CD4-positive, alpha-beta memory T cell (primary cell): ENCODE measurements at regions of chr4 and their contacts with region 1.

Region 1: DNA sequence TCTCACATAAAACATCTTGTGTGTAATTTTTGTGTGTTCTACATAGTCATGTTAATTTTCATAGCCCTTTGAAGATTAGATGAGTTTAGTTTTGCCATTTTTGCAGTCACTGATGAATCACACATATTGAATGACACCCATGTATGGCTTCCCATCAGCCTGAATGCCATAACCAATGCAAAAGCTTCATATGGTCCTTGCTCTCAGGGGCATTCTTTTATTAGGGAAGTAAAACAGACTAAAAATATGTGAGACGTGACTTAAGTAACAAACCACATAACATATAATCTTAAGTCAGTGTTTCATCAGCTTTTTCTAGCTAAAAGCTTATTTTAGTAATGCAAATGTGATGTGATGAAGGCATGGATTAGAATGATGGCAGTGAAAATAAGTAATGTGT is 8.2 kb downstream of the SLC25A4 start:
- DNase-seq: no peak
- H3K4me3 ChIP-seq: no peak overlapping the region
- H3K4me3 Mint-ChIP-seq: no peak overlapping the region
- H3K27ac ChIP-seq: no peak overlapping the region
- H3K27ac Mint-ChIP-seq: no peak overlapping the region
- H3K4me1 ChIP-seq: no peaks in the 10 kb centered on the region
- H3K4me1 Mint-ChIP-seq: peaks cover 0 to 2% (median 0%) of the 10 kb centered on the region in 4 donors
- H3K27me3 ChIP-seq: no peaks in the 10 kb centered on the region
- H3K27me3 Mint-ChIP-seq: no peaks in the 10 kb centered on the region

Region 2: DNA sequence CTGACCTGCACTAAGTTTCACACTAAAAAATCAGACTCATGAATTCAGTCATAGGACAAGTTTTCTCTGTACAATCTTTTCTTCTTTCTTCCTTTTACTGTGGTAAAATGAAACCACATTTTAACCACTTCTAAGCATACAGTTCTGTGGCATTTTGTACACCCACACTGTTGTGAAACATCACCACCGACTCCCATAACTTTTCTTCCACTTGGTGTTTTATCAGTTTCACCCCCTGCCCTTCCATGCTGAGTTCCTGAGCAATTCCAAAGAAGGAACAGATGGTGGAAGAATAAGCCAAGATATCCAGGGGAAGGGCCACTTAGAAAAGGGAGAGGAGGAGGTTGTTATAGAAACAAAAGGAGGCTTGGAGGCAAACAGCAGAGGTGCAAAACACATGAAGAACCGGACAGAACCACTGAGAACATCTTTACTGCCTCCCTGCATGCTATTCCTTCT is 14.3 kb after region 1 on chr4:
- CTCF ChIA-PET with region 1: interaction called, 11 read pairs
- POLR2A ChIA-PET with region 1: no interaction called
- intact Hi-C with region 1: no loop called
- DNase-seq: peak in 4 of 5 donors; percentile 63 to 70 (median 66)
- H3K4me3 ChIP-seq: no peak overlapping the region
- H3K4me3 Mint-ChIP-seq: peak overlapping the region; percentile 29 to 78 (median 60)
- H3K27ac ChIP-seq: no peak overlapping the region
- H3K27ac Mint-ChIP-seq: peak overlapping the region in 6 of 7 donors; percentile 32 to 86 (median 50)
- H3K4me1 ChIP-seq: peaks cover 18% of the 10 kb centered on the region
- H3K4me1 Mint-ChIP-seq: peaks cover 15 to 32% (median 23%) of the 10 kb centered on the region in 4 donors
- H3K27me3 ChIP-seq: no peaks in the 10 kb centered on the region
- H3K27me3 Mint-ChIP-seq: no peaks in the 10 kb centered on the region

Region 3: DNA sequence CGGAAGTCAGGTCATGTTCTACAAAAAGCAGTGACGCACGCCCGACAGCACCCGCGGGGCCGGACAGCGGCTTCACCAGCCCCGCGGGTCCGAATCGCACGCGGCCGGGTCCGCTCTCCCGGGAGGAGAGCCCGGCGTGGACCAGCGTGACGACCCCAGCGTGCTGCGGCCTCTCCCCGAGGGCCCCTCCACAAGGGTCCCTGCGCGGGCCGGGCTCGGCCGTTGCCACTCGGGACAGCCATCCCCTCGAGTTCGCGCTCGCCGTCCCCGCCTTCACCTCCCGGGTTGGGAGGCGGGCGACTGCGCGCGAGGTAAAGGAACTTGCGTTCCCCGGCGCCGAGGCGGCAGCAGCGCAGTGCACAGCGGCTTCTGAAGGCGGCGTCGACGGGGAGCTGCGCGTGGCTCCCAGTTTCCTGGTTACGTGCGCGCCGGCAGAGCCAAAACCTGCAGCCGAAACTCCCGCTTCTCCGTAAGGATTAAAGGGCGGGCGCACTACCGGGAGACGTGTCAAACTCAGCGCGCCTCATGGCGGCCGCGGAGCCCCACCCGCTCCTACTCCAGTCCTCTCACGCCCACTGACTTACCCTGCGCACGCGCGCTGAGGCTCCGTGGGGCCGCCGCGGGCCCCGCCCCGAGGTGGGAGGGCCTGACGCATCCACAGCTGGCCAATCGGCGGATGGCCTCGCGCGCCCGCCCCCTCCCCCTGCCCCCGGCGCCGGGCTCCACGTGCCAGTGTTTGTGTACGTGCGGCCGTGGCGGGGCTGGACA is 244.8 kb after region 1 on chr4:
- CTCF ChIA-PET with region 1: no interaction called
- POLR2A ChIA-PET with region 1: no interaction called
- intact Hi-C with region 1: no loop called
- DNase-seq: peak; percentile 95 to 98 (median 97)
- H3K4me3 ChIP-seq: peak overlapping the region; percentile 91 to 99
- H3K4me3 Mint-ChIP-seq: peak overlapping the region; percentile 88 to 99 (median 95)
- H3K27ac ChIP-seq: peak overlapping the region; percentile 99
- H3K27ac Mint-ChIP-seq: peak overlapping the region; percentile 92 to 100 (median 99)
- H3K4me1 ChIP-seq: peaks cover 18% of the 10 kb centered on the region
- H3K4me1 Mint-ChIP-seq: peaks cover 11 to 24% (median 18%) of the 10 kb centered on the region in 4 donors
- H3K27me3 ChIP-seq: no peaks in the 10 kb centered on the region
- H3K27me3 Mint-ChIP-seq: no peaks in the 10 kb centered on the region